Heart right ventricle (tissue), 16 donors: ENCODE measurements at regions of chr2 and their contacts with region 1.

Region 1: DNA sequence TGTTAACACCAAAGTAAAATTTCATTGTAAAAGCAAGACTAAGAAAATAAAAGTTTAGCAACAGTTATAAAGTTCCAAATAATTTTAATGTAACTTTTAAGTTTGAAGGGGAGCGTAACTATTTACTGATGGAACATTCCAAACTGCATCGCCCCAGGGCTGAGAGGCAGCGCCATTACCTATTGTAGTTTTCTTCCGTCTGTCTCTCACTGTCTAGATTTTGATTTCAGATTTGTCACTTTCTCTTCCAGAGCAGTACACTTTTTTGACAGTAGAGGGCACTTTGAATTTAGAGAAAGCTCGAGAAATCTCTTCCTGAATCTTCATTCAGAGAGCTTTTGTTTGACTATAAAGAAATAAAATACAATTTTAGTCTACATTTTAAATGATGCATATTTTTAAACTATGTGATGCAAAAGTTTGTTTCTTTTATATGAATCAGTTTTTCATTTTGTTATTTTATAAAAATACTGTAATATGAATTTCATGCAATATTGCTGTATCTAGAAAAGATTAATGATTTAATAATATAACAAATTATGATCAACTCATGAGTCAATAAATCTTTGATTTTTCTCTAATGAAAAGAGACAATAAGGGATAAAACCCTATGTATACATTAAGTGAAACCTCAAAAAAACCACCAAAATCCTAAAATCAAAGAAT is 389.8 kb downstream of the FIGN start:
- DNase-seq: peak in 1 of 2 donors; percentile 5
- ATAC-seq: no peak
- H3K4me3 ChIP-seq: no peak overlapping the region
- H3K27ac ChIP-seq: no peak overlapping the region
- H3K4me1 ChIP-seq: peaks cover 0 to 26% (median 9%) of the 10 kb centered on the region in 9 donors
- H3K27me3 ChIP-seq: no peaks in the 10 kb centered on the region
- CTCF ChIP-seq: peak; percentile 58 to 87 (median 81)

Region 2: GRCh38 chr2:163182764-163183354 is 163.2 kb before region 1 on chr2:
- intact Hi-C with region 1: loop called in 1 of 10 experiments (anchors 10 kb)
- DNase-seq: no peak
- ATAC-seq: no peak
- H3K4me3 ChIP-seq: no peak overlapping the region
- H3K27ac ChIP-seq: no peak overlapping the region
- H3K4me1 ChIP-seq: no peaks in the 10 kb centered on the region
- H3K27me3 ChIP-seq: peaks cover 0 to 10% (median 0%) of the 10 kb centered on the region in 7 donors
- CTCF ChIP-seq: peak; percentile 24 to 73 (median 58)

Region 3: GRCh38 chr2:163471947-163472346 is 125.9 kb after region 1 on chr2:
- intact Hi-C with region 1: loop called in 2 of 10 experiments (anchors 5 kb)
- DNase-seq: peak in 1 of 2 donors; percentile 13
- ATAC-seq: peak in 6 of 8 donors; percentile 44 to 75 (median 64)
- H3K4me3 ChIP-seq: no peak overlapping the region
- H3K27ac ChIP-seq: no peak overlapping the region
- H3K4me1 ChIP-seq: peaks cover 0 to 10% (median 0%) of the 10 kb centered on the region in 9 donors
- H3K27me3 ChIP-seq: no peaks in the 10 kb centered on the region
- CTCF ChIP-seq: peak in 8 of 9 donors; percentile 16 to 61 (median 46)

Region 4: GRCh38 chr2:164061129-164061746 is 715.2 kb after region 1 on chr2:
- intact Hi-C with region 1: loop called in 8 of 10 experiments (anchors 2 to 10 kb)
- DNase-seq: no peak
- ATAC-seq: no peak
- H3K4me3 ChIP-seq: no peak overlapping the region
- H3K27ac ChIP-seq: no peak overlapping the region
- H3K4me1 ChIP-seq: no peaks in the 10 kb centered on the region
- H3K27me3 ChIP-seq: no peaks in the 10 kb centered on the region
- CTCF ChIP-seq: peak; percentile 28 to 72 (median 61)

Region 5: DNA sequence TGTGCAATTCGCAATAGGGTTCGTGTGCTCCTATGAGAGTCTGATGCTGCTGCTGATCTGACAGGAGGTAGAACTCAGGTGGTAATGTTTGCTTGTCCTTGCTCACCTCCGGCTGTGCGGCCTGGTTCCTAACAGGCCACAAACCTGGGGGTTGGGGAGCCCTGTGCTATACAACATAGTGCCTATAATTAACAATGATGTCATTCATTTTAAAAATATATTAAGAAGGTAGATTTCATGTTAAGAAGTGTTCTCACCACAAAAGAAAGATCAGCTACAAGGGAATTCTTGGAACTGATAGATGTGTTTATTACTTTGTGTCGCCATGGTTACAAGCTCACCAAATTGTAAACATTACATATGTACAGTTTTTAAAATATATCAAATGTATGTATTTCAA is 1074.7 kb after region 1 on chr2:
- intact Hi-C with region 1: loop called in 3 of 10 experiments (anchors 5 to 10 kb)
- DNase-seq: no peak
- ATAC-seq: no peak
- H3K4me3 ChIP-seq: no peak overlapping the region
- H3K27ac ChIP-seq: no peak overlapping the region
- H3K4me1 ChIP-seq: no peaks in the 10 kb centered on the region
- H3K27me3 ChIP-seq: no peaks in the 10 kb centered on the region
- CTCF ChIP-seq: no peak